Upper lobe of right lung (tissue), 1 donor: ENCODE measurements at regions of chr1 and their contacts with region 1.

Region 1: DNA sequence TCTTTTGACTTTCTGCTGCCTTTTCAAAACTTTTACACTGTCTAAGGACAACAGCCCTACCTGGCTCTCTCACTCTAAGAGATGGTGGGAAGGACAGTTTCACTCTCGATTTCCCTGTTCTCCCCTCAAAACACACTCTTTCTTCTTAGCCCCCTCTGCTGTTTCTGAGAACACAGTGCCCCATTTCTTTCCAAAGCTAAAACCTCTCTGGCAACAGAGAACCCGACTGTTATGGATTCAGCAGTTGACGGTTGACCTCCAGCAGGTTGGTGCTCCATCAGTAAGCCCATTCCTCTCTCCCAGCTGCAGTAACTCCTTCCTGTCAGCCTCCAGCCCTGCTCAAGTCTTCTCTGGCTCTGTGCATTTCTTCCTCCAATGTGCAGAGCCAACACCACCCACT is 88.2 kb upstream of the ABCD3 start:
- DNase-seq: no peak
- ATAC-seq: peak; percentile 48
- H3K4me3 ChIP-seq: no peak overlapping the region
- H3K27ac ChIP-seq: peak overlapping the region; percentile 21
- H3K4me1 ChIP-seq: peaks cover 35% of the 10 kb centered on the region
- H3K27me3 ChIP-seq: no peaks in the 10 kb centered on the region
- CTCF ChIP-seq: peak; percentile 49

Region 2: DNA sequence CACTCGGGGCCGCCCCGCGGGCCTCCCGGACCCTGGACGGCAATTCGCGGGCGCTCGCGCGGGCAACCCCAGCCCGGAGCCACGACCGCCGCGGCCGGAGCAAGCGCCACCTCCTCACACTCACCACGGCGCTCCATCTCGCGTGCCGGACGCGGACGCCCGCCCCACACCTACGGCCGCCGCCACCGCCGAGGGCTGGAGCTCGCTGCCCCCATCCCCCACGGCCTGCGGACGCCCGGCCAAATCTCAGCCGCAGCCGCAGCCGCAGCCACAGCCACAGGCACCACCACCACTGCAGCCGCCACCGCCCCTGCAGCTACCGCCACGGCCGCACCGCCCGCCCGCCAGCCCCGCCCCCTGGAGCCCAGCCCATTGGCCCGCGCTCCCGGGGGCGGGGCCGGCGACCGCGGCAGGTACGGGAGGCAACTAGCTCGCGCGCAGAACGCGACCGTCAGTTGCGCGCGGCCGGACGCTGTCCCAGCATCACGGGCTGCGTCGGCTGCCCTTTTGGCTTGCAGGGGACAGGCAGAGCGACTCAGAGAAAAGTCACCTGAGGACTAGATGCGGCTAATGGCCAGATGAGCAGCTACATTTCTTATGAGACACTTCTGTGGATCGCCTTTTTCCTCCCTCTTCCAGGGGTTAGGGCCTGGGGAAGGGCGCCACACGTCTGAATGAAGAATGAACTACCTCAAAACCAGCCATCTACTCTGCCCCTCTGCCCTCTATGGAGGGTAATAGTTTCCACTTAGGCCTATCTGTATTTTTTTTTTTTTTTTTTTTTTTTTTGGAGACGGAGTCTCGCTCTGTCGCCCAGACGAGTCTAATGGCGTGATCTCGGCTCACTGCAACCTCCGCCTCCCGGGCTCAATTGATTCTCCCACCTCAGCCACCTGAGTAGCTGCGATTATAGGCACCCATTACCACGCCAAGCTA is 92.4 kb before region 1 on chr1 and contains the start of gene ARHGAP29:
- intact Hi-C with region 1: loop called (anchors 10 kb)
- DNase-seq: peak; percentile 93
- ATAC-seq: peak; percentile 99
- H3K4me3 ChIP-seq: peak within 1 kb of the TSS; percentile 83
- H3K27ac ChIP-seq: peak within 1 kb of the TSS; percentile 92
- H3K4me1 ChIP-seq: peaks cover 8% of the 10 kb centered on the region
- H3K27me3 ChIP-seq: no peaks in the 10 kb centered on the region
- CTCF ChIP-seq: no peak
- total RNA-seq, gene ARHGAP29: 66.5 TPM